Mammary epithelial cell (primary cell): ENCODE measurements at regions of chr4 and their contacts with region 1.

Region 1: GRCh38 chr4:147096667-147097604 is 151.3 kb upstream of the TTC29 start:
- DNase-seq: peak; percentile 31
- H3K4me3 ChIP-seq: no peak overlapping the region
- H3K27ac ChIP-seq: no peak overlapping the region
- H3K4me1 ChIP-seq: peaks cover 2% of the 10 kb centered on the region
- H3K27me3 ChIP-seq: no peaks in the 10 kb centered on the region
- CTCF ChIP-seq: peak; percentile 58 to 59

Region 2: DNA sequence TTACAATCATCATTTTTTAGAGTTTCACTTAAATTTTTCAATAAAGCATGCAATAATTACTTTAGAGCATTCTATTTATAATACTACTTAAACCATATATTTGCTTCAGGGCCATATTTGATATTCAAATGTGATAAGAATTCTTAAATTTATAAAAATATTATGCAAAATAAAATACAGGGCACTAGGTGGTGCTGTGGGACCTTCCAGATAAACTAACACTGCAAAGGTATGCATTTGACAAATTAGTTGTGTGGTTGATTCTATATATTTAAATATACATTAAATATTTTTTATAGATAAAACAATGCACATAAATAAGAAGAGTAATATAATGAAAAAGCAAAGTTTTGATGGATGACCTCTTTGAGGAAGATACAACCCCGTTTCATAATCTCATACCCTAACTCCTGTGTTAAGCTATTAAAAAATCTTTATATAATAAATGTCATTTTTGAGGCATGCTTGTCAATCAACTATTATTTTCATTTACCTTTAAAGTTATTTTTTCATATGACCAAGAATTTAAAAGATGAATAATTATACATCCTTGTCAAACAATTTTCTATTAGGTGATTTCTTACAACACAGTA is 754.2 kb before region 1 on chr4:
- CTCF ChIA-PET with region 1: no interaction called
- dilution Hi-C with region 1: no loop called
- in situ Hi-C with region 1: loop called in 1 of 2 experiments (anchors 25 kb)
- intact Hi-C with region 1: loop called (anchors 2 kb)
- DNase-seq: no peak
- H3K4me3 ChIP-seq: no peak overlapping the region
- H3K27ac ChIP-seq: no peak overlapping the region
- H3K4me1 ChIP-seq: no peaks in the 10 kb centered on the region
- H3K27me3 ChIP-seq: no peaks in the 10 kb centered on the region
- CTCF ChIP-seq: peak; percentile 37 to 54

Region 3: GRCh38 chr4:146585761-146586333 is 511.1 kb before region 1 on chr4:
- CTCF ChIA-PET with region 1: interaction called, 4 read pairs
- dilution Hi-C with region 1: no loop called
- in situ Hi-C with region 1: no loop called
- intact Hi-C with region 1: loop called (anchors 10 kb)
- DNase-seq: peak; percentile 15
- H3K4me3 ChIP-seq: no peak overlapping the region
- H3K27ac ChIP-seq: no peak overlapping the region
- H3K4me1 ChIP-seq: no peaks in the 10 kb centered on the region
- H3K27me3 ChIP-seq: no peaks in the 10 kb centered on the region
- CTCF ChIP-seq: no peak

Region 4: GRCh38 chr4:147019061-147019460 is 77.9 kb before region 1 on chr4:
- CTCF ChIA-PET with region 1: interaction called, 21 read pairs
- dilution Hi-C with region 1: no loop called
- in situ Hi-C with region 1: loop called (anchors 5 to 10 kb)
- intact Hi-C with region 1: loop called (anchors 1 kb)
- DNase-seq: peak; percentile 42
- H3K4me3 ChIP-seq: no peak overlapping the region
- H3K27ac ChIP-seq: no peak overlapping the region
- H3K4me1 ChIP-seq: no peaks in the 10 kb centered on the region
- H3K27me3 ChIP-seq: peaks cover 3% of the 10 kb centered on the region
- CTCF ChIP-seq: peak; percentile 69 to 81

Region 5: DNA sequence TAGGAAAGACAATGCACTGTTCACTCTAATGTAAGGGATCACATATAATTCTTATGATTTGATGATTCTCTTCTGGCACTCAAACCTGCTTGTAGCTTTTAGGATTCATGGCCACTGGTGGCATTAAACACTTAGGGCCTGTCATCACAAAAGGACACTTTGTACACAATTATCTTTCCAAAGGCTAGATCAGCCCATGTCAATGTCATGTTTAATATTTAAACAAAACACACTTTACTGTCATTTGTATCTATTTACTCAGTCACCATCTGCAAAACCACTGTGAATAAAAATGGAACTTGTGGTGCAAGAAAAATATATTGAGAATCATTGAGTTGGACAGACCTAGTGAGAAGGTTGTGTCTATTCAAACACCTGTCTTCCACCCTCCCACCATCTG is 67.6 kb before region 1 on chr4:
- CTCF ChIA-PET with region 1: no interaction called
- dilution Hi-C with region 1: no loop called
- in situ Hi-C with region 1: loop called in 1 of 2 experiments (anchors 10 kb)
- intact Hi-C with region 1: no loop called
- DNase-seq: no peak
- H3K4me3 ChIP-seq: no peak overlapping the region
- H3K27ac ChIP-seq: no peak overlapping the region
- H3K4me1 ChIP-seq: no peaks in the 10 kb centered on the region
- H3K27me3 ChIP-seq: peaks cover 4% of the 10 kb centered on the region
- CTCF ChIP-seq: no peak

Region 6: DNA sequence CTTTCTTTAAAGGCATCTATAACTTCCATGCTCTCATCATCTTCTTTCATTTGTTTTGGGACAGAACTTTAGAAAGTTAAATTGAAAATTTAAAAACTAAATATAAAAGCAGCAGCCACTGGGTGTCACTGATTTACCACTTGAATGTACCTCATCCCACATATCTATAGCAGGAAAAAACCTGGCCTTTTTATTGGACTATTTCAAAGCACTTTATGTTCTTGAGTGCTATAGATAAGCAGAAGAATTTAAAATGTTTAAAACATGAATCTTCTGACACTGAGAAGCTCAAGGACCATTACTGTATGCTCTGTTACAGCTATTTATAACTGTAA is 14.1 kb after region 1 on chr4:
- CTCF ChIA-PET with region 1: no interaction called
- dilution Hi-C with region 1: no loop called
- in situ Hi-C with region 1: no loop called
- intact Hi-C with region 1: no loop called
- DNase-seq: no peak
- H3K4me3 ChIP-seq: no peak overlapping the region
- H3K27ac ChIP-seq: no peak overlapping the region
- H3K4me1 ChIP-seq: no peaks in the 10 kb centered on the region
- H3K27me3 ChIP-seq: no peaks in the 10 kb centered on the region
- CTCF ChIP-seq: peak in 1 of 2 donors; percentile 28

Region 7: DNA sequence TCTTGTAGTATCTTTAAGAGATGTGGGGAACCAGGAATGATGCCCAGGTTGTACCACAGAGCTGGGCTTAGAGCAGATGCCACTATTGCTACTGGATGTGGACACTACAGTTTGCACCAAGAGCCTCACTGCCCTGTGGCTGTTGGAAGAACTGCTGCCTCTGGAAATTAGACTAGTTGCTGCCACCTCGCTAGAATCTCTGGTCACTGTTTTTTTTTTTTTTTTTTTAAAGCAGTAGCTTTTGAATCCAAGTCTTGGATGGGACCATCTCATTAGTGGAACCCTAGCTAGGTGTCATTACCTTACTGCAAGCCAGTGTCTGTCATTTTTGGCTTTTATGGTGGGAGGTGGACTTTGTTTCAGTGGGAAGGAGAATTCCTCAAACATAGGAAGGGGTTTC is 740.5 kb after region 1 on chr4:
- CTCF ChIA-PET with region 1: interaction called, 10 read pairs
- dilution Hi-C with region 1: no loop called
- in situ Hi-C with region 1: no loop called
- intact Hi-C with region 1: no loop called
- DNase-seq: no peak
- H3K4me3 ChIP-seq: no peak overlapping the region
- H3K27ac ChIP-seq: no peak overlapping the region
- H3K4me1 ChIP-seq: peaks cover 12% of the 10 kb centered on the region
- H3K27me3 ChIP-seq: no peaks in the 10 kb centered on the region
- CTCF ChIP-seq: peak; percentile 36 to 49